ENCODE measurements at regions of chr7 and their contacts with region 1.

Region 1: DNA sequence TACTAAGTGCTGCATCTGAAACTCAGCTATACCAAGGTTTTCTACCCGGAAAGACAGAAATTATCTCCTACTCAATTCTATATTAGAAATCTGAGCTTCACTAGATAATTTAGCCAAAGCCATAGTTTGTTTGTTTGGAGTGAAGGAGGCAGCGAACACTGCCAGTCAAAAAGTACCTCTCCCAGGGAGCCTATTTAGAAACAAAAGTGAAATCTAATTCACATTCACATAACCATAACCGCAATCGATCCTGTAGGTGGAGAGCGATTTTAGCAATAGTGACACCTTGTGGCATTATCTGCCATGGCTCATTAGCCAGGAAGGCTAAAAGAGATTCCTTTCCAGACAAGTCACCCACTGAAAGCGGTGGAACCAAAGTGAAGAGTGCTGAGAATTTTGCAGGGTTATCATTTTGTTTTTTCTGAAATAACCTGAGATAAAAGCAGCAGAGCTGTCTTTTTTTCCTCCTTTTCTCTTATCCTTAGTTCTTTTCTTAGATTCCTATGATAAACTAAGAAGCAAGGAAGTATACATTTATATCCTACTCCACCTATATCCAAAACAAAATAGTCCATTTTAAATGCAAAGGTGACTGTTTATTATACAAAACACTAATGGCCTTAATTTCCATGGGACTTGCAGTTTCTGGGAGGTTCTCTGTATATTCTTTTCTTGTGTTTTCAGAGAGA is 83.7 kb upstream of the BET1 start:
- DNase-seq: peak; percentile 66
- H3K4me3 ChIP-seq: peak overlapping the region in 1 of 2 experiments; percentile 15; a peak in 1 of 4 replicates
- H3K27ac ChIP-seq: peak overlapping the region in 1 of 2 experiments; percentile 11; a peak in 2 of 4 replicates
- H3K4me1 ChIP-seq: peaks cover 9 to 11% of the 10 kb centered on the region in 2 experiments
- H3K27me3 ChIP-seq: no peaks in the 10 kb centered on the region
- CTCF ChIP-seq: peak; percentile 94
- EP300 ChIP-seq: peak; percentile 44 to 67; a peak in 2 of 4 replicates
- RAD21 ChIP-seq: peak; percentile 92

Region 2: DNA sequence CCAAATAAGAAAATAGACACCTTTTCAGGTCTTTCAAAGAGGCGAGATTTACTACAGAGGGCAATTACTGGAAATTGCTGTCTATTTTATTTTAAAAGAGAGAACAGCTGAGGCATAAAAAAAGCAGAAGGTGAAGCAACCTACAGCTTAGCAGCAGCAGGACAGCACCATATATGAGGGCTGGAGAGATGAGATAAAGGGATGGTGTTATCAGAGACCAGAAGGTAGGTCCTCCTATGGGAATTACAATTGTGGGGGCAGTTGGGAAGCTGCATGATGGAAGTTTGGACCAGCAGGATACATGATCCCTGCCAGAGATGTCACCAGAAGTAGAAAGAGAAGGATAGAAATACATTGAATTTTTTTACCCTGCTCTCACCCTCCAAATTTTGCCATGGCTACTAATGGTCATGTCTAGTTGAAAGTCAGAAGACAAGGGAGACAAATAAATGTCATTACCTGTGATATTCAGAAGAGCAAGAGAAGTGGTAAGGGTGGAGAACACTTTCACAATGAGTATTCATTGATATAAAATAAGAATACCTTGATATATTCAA is 436.1 kb before region 1 on chr7:
- CTCF ChIA-PET with region 1: no interaction called
- POLR2A ChIA-PET with region 1: no interaction called
- DNase-seq: no peak
- H3K4me3 ChIP-seq: no peak overlapping the region
- H3K27ac ChIP-seq: no peak overlapping the region
- H3K4me1 ChIP-seq: no peaks in the 10 kb centered on the region; a peak in 1 of 4 replicates
- H3K27me3 ChIP-seq: no peaks in the 10 kb centered on the region
- CTCF ChIP-seq: no peak
- EP300 ChIP-seq: no peak
- RAD21 ChIP-seq: no peak

Region 3: DNA sequence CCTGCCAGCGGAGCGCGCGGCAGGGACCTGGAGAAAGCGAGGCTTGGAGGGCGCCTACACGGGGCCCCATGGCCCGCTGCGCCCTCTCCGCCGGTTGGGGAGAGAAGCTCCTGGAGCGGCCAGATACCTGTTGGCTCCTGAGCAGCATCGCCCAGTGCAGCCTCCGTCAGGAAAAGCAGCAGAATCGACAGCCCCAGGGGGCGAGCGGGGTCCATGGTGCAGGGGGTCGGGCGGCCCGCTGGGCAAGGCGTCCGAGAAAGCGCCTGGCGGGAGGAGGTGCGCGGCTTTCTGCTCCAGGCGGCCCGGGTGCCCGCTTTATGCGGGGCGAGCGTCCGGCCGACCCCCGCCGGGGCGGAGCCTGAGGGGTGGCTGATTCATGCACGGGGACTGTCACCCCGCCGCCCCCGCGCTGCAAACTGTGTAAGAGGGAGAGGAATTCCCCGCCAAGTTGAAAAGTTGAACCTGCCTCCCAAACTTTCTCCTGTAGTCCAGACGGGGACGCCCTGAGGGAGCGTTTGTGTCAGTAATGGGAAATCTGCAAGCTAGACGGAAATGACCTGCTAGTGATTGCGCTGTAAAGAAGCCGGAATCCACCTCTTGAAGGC is 197.2 kb before region 1 on chr7 and contains the start of gene TFPI2:
- CTCF ChIA-PET with region 1: interaction called, 26 read pairs
- POLR2A ChIA-PET with region 1: no interaction called
- DNase-seq: peak; percentile 83
- H3K4me3 ChIP-seq: peak within 1 kb of the TSS; percentile 79 to 80
- H3K27ac ChIP-seq: peak within 1 kb of the TSS in 1 of 2 experiments; percentile 53; a peak in 1 of 4 replicates
- H3K4me1 ChIP-seq: peaks cover 0 to 12% of the 10 kb centered on the region in 2 experiments; a peak in 2 of 4 replicates
- H3K27me3 ChIP-seq: no peaks in the 10 kb centered on the region
- CTCF ChIP-seq: no peak
- EP300 ChIP-seq: no peak
- RAD21 ChIP-seq: peak; percentile 46
- polyA plus RNA-seq, gene TFPI2: 16.9 and 17.7 TPM in 2 replicates

Region 4: GRCh38 chr7:93921607-93922566 is 165.9 kb before region 1 on chr7 and contains the start of gene GNG11:
- CTCF ChIA-PET with region 1: interaction called, 16 read pairs
- POLR2A ChIA-PET with region 1: no interaction called
- DNase-seq: peak; percentile 86
- H3K4me3 ChIP-seq: peak within 1 kb of the TSS; percentile 69 to 79
- H3K27ac ChIP-seq: peak within 1 kb of the TSS; percentile 78 to 98
- H3K4me1 ChIP-seq: peaks cover 14 to 25% of the 10 kb centered on the region in 2 experiments; a peak in 3 of 4 replicates
- H3K27me3 ChIP-seq: no peaks in the 10 kb centered on the region
- CTCF ChIP-seq: no peak
- EP300 ChIP-seq: 0 out of 4 replicates have a peak, but pooled peaks of 1 of the 2 experiments have one; percentile 32
- RAD21 ChIP-seq: peak; percentile 54
- polyA plus RNA-seq, gene GNG11: 9.8 and 11.5 TPM in 2 replicates

Region 5: DNA sequence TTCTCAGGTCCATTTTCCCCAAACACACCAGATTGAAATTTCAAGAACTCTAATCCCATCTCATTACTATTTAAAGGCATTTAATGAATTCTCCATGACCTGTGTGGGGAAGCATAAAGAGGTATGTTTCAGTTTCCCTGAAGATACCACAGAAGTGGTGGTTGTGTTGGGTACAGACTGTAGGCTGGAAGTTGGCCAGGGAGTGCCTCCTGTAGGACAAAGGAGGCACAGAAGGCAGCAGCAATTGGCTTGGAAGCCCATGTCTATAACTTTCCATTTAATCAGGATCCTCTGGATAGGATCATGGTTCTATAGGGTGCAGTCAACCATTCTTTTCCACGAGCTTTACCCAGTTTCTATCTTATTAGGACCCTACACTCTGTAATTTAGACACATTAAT is 75.1 kb before region 1 on chr7:
- CTCF ChIA-PET with region 1: no interaction called
- POLR2A ChIA-PET with region 1: no interaction called
- DNase-seq: peak; percentile 22
- H3K4me3 ChIP-seq: no peak overlapping the region
- H3K27ac ChIP-seq: no peak overlapping the region
- H3K4me1 ChIP-seq: no peaks in the 10 kb centered on the region
- H3K27me3 ChIP-seq: no peaks in the 10 kb centered on the region
- CTCF ChIP-seq: no peak
- EP300 ChIP-seq: no peak
- RAD21 ChIP-seq: no peak

Region 6: DNA sequence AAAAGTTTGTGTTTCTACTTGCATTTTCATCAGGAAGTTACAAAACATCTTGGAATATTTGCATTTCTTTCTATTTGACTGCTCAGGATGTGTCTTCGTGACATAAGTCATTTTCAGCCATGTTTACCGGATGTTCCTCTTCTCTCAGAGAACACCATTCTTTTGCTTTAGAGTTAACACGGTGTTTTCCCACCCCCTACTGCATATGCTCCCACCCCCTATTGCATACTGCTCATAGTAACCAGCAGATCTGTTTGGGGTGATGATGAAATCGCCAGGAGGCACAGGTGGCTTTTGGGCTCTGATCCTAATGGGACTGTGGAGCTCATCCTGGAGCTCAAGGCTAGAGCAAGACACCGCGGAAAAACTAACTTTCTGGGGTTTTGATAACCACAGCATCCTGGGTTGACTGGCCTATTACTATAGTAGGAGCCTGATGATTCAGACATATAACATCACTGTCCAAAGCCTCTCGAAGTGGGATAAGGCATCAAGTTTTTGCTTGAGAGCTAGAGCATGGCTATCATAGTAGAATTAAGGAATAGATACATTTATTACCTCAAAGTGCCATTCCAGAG is 18.6 kb before region 1 on chr7:
- CTCF ChIA-PET with region 1: interaction called, 61 read pairs
- POLR2A ChIA-PET with region 1: no interaction called
- DNase-seq: no peak
- H3K4me3 ChIP-seq: no peak overlapping the region
- H3K27ac ChIP-seq: peak overlapping the region in 1 of 2 experiments; percentile 35; a peak in 2 of 4 replicates
- H3K4me1 ChIP-seq: peaks cover 2 to 11% of the 10 kb centered on the region in 2 experiments
- H3K27me3 ChIP-seq: no peaks in the 10 kb centered on the region
- CTCF ChIP-seq: no peak
- EP300 ChIP-seq: no peak
- RAD21 ChIP-seq: no peak

Region 7: GRCh38 chr7:94178230-94178629 is 90.4 kb after region 1 on chr7:
- CTCF ChIA-PET with region 1: no interaction called
- POLR2A ChIA-PET with region 1: no interaction called
- DNase-seq: no peak
- H3K4me3 ChIP-seq: no peak overlapping the region
- H3K27ac ChIP-seq: no peak overlapping the region
- H3K4me1 ChIP-seq: peaks cover 0 to 10% of the 10 kb centered on the region in 2 experiments; a peak in 2 of 4 replicates
- H3K27me3 ChIP-seq: no peaks in the 10 kb centered on the region
- CTCF ChIP-seq: no peak
- EP300 ChIP-seq: no peak
- RAD21 ChIP-seq: no peak

Measured in SK-N-SH (cell line).